ENCODE measurements at regions of chr21 and their contacts with region 1.

Region 1: GRCh38 chr21:42467140-42467983 is 28.7 kb downstream of the RSPH1 start:
- DNase-seq: peak in 3 of 9 experiments; percentile 36 to 58 (median 38)
- ATAC-seq: no peak
- H3K4me3 ChIP-seq: no peak overlapping the region
- H3K4me3 Mint-ChIP-seq: no peak overlapping the region
- H3K27ac ChIP-seq: no peak overlapping the region
- H3K27ac Mint-ChIP-seq: no peak overlapping the region
- H3K4me1 ChIP-seq: peaks cover 35% of the 10 kb centered on the region
- H3K4me1 Mint-ChIP-seq: peaks cover 37% of the 10 kb centered on the region
- H3K27me3 ChIP-seq: no peaks in the 10 kb centered on the region
- H3K27me3 Mint-ChIP-seq: no peaks in the 10 kb centered on the region
- CTCF ChIP-seq: peak; percentile 27

Region 2: DNA sequence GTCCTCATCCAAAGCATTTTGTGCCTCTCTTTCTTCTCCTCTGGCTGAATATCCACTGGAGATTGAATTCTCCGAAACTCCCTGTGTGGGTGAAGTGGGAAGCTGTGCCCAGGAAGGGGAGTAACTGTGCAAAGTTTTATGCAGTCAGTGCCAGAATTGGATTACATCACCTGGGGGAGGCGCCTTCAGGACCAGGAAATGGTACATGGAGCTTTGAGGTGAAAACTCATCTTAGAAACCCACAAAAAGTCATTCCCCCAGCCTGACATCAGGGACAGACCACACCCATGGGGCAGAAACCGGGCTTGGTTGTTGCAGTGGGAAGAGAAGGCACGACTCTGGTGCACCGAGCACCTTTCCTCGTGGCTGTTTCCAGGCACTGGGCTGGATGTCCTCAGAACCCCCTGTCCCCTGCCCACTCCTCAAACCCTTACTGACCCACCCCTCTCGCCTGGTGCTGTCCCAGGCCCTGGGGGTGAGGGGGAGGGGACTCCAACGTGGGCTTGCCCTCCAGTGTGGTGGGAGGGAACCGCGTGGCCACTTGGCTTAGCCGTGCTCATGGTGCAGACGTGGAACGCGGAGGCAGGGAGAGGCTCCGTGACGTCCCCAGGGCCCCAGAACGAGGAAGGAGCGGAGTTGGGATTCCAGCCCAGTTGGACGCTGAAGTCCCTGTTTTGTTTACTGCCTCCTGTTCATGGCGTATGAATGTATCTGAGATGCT is 167.9 kb before region 1 on chr21:
- CTCF ChIA-PET with region 1: no interaction called
- POLR2A ChIA-PET with region 1: no interaction called
- intact Hi-C with region 1: no loop called
- DNase-seq: peak in 1 of 9 experiments; percentile 53
- ATAC-seq: peak; percentile 54
- H3K4me3 ChIP-seq: no peak overlapping the region
- H3K4me3 Mint-ChIP-seq: no peak overlapping the region
- H3K27ac ChIP-seq: no peak overlapping the region
- H3K27ac Mint-ChIP-seq: no peak overlapping the region
- H3K4me1 ChIP-seq: peaks cover 8% of the 10 kb centered on the region
- H3K4me1 Mint-ChIP-seq: peaks cover 7% of the 10 kb centered on the region
- H3K27me3 ChIP-seq: no peaks in the 10 kb centered on the region
- H3K27me3 Mint-ChIP-seq: no peaks in the 10 kb centered on the region
- CTCF ChIP-seq: no peak

Region 3: GRCh38 chr21:42414928-42415769 is 52.2 kb before region 1 on chr21:
- CTCF ChIA-PET with region 1: no interaction called
- POLR2A ChIA-PET with region 1: no interaction called
- intact Hi-C with region 1: loop called in 1 of 2 experiments (anchors 1 kb)
- DNase-seq: peak; percentile 66 to 98 (median 89)
- ATAC-seq: peak; percentile 91
- H3K4me3 ChIP-seq: peak overlapping the region; percentile 0 to 29
- H3K4me3 Mint-ChIP-seq: peak overlapping the region; percentile 74
- H3K27ac ChIP-seq: peak overlapping the region; percentile 63 to 82
- H3K27ac Mint-ChIP-seq: peak overlapping the region; percentile 99
- H3K4me1 ChIP-seq: peaks cover 77% of the 10 kb centered on the region
- H3K4me1 Mint-ChIP-seq: peaks cover 61% of the 10 kb centered on the region
- H3K27me3 ChIP-seq: peaks cover 0 to 2% of the 10 kb centered on the region in 2 experiments
- H3K27me3 Mint-ChIP-seq: no peaks in the 10 kb centered on the region
- CTCF ChIP-seq: no peak

Region 4: DNA sequence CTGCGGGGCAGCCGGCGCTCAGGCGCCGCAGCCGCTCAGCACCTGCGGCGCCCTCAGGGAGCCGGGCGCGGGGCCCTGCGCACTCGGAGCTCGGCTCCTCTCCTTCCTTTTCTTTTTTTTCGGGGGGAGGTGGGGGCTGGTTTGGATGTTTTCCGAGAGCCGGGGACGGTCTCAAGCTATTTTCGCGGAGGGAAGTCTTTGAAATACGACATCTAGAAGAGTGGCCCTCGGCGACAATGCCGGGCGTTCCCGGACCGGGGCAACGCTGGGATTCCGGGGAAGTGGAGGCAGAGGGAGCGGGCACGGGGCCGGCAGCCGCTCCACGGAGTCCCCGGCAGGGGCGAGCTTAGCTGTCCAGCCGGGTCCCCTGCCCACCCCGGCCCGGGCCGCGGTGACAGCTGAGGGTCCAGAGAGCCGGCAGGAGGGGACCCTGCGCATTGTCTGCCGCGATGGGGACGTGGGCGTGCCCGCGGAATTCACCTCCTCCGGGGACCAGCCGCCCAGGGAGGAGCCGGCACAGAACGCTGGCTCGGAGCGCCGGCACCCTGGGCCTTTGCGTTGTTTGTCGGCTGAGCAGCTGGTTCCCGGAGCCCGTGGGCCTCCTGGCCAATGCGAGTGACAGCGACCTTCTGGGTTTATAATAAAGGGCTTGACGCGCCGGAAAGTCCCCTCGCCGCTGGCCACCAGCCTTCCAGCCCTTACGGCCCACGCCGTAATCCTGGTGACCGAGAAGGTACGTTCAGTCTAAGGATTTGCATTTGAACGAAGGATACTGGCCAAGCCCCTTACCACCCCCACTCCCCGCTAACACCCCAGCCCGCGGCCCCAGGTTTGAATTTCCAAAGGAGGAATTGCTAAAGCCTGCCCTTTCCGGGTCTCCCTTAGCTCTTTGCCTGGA is 46.9 kb after region 1 on chr21:
- CTCF ChIA-PET with region 1: no interaction called
- POLR2A ChIA-PET with region 1: no interaction called
- intact Hi-C with region 1: loop called in 1 of 2 experiments (anchors 5 kb)
- DNase-seq: peak in 8 of 9 experiments; percentile 35 to 78 (median 66)
- ATAC-seq: peak; percentile 85
- H3K4me3 ChIP-seq: peak overlapping the region; percentile 75 to 78
- H3K4me3 Mint-ChIP-seq: peak overlapping the region; percentile 80
- H3K27ac ChIP-seq: peak overlapping the region; percentile 64 to 76
- H3K27ac Mint-ChIP-seq: peak overlapping the region; percentile 82
- H3K4me1 ChIP-seq: peaks cover 18% of the 10 kb centered on the region
- H3K4me1 Mint-ChIP-seq: peaks cover 42% of the 10 kb centered on the region
- H3K27me3 ChIP-seq: no peaks in the 10 kb centered on the region
- H3K27me3 Mint-ChIP-seq: no peaks in the 10 kb centered on the region
- CTCF ChIP-seq: no peak

Region 5: DNA sequence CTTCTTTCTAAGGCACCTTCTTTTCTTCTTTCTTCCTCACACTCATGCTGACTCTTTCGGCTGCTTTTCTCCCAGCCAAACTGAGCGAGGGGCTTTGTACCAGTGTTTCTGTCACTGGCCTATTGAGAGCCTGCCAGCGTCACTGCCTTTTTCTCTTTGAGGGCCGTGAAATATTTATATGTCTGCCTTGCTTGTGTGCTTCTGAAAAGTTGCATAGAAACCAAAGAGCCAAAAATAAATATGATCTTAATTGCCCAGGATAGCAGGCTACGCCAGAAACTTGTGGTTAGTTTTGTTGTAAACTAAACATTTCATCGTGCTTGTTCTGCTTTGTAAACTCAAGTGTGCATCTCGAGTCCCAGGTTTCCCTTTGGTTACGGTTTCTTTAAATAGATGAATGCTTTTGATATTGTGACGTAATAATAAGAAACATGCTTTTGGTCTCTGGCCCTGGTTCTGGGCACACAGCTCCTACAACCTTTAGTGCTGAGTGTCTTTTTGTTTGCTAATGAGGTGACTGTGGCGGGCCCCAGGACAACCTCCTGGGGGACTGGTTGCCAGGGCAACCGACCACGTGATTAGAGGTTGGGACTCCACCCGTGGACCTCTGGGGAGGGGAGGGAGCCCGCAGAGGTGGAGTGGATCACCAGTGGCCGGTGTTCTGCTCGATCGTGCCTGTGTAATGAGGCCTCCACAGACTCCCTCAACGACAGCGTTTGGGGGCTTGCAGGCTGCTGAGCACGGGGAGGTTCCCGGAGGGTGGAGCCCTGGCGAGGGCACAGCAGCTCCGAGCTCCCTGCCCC is 57.2 kb after region 1 on chr21:
- CTCF ChIA-PET with region 1: interaction called, 3 read pairs
- POLR2A ChIA-PET with region 1: no interaction called
- intact Hi-C with region 1: loop called (anchors 5 kb)
- DNase-seq: peak; percentile 29 to 83 (median 67)
- ATAC-seq: peak; percentile 41
- H3K4me3 ChIP-seq: peak overlapping the region in 1 of 2 experiments; percentile 14
- H3K4me3 Mint-ChIP-seq: peak overlapping the region; percentile 52
- H3K27ac ChIP-seq: peak overlapping the region; percentile 17 to 57
- H3K27ac Mint-ChIP-seq: peak overlapping the region; percentile 81
- H3K4me1 ChIP-seq: peaks cover 48% of the 10 kb centered on the region
- H3K4me1 Mint-ChIP-seq: peaks cover 48% of the 10 kb centered on the region
- H3K27me3 ChIP-seq: no peaks in the 10 kb centered on the region
- H3K27me3 Mint-ChIP-seq: no peaks in the 10 kb centered on the region
- CTCF ChIP-seq: no peak

Region 6: GRCh38 chr21:42537106-42537742 is 69.9 kb after region 1 on chr21:
- CTCF ChIA-PET with region 1: interaction called, 5 read pairs
- POLR2A ChIA-PET with region 1: no interaction called
- intact Hi-C with region 1: loop called in 1 of 2 experiments (anchors 1 kb)
- DNase-seq: peak in 2 of 9 experiments; percentile 43 to 53
- ATAC-seq: peak; percentile 66
- H3K4me3 ChIP-seq: no peak overlapping the region
- H3K4me3 Mint-ChIP-seq: no peak overlapping the region
- H3K27ac ChIP-seq: no peak overlapping the region
- H3K27ac Mint-ChIP-seq: no peak overlapping the region
- H3K4me1 ChIP-seq: peaks cover 6% of the 10 kb centered on the region
- H3K4me1 Mint-ChIP-seq: peaks cover 22% of the 10 kb centered on the region
- H3K27me3 ChIP-seq: no peaks in the 10 kb centered on the region
- H3K27me3 Mint-ChIP-seq: no peaks in the 10 kb centered on the region
- CTCF ChIP-seq: no peak